Transverse colon (tissue), 4 donors: ENCODE measurements at regions of chr12 and their contacts with region 1.

Region 1: DNA sequence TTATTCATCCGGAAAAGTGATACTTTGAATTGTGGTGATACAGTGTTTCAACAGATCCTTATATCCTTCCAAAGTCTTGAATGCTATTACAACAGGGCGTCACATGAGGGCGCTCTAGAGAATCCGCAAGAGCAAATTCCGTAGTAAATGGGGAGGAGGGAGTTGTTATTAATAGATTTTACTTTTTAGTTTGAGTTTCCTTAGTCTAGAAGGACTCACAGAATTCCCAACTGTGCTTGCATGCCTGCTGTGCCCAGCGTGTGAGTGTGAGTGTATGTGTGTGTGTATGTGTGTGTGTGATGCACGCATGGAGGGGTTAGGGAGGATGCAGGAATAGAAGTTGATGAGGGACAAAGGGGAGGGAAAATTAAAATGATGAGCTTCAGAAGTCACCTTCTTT is 375.3 kb downstream of the C12orf75 start:
- DNase-seq: peak; percentile 53
- H3K4me3 ChIP-seq: no peak overlapping the region
- H3K27ac ChIP-seq: no peak overlapping the region
- H3K4me1 ChIP-seq: peaks cover 0 to 6% (median 0%) of the 10 kb centered on the region in 4 donors
- H3K27me3 ChIP-seq: no peaks in the 10 kb centered on the region
- CTCF ChIP-seq: peak; percentile 53 to 70 (median 62)
- EP300 ChIP-seq: no peak
- POLR2A ChIP-seq: no peak

Region 2: GRCh38 chr12:105738051-105738450 is 32.3 kb after region 1 on chr12:
- in situ Hi-C with region 1: no loop called
- intact Hi-C with region 1: loop called (anchors 1 kb)
- DNase-seq: no peak
- H3K4me3 ChIP-seq: no peak overlapping the region
- H3K27ac ChIP-seq: peak overlapping the region in 1 of 4 donors; percentile 21
- H3K4me1 ChIP-seq: peaks cover 0 to 12% (median 3%) of the 10 kb centered on the region in 4 donors
- H3K27me3 ChIP-seq: no peaks in the 10 kb centered on the region
- CTCF ChIP-seq: no peak
- EP300 ChIP-seq: no peak
- POLR2A ChIP-seq: no peak

Region 3: DNA sequence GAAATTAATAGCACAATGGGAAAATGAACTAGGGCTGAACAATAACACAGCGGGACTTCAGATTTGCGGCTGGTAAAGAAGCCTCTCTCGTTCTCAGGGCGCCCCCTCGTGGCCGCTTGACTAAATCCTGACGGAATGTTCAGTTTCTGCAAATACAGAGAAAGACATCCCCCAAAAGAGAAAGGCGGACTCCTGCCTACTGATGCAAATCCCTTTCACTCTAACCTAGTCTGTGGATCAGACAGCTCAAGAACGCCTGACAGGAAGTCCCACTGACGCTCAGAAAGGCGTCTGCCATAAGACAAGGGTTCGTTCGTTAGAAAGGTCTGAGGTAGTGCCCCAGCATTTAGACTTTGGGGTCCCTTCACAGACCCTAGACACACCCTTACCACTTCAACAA is 430.5 kb after region 1 on chr12:
- in situ Hi-C with region 1: loop called (anchors 10 to 25 kb)
- intact Hi-C with region 1: loop called (anchors 10 kb)
- DNase-seq: peak; percentile 86
- H3K4me3 ChIP-seq: peak overlapping the region in 1 of 4 donors; percentile 17
- H3K27ac ChIP-seq: peak overlapping the region; percentile 8 to 90 (median 72)
- H3K4me1 ChIP-seq: peaks cover 0 to 41% (median 11%) of the 10 kb centered on the region in 4 donors
- H3K27me3 ChIP-seq: peaks cover 35% of the 10 kb centered on the region
- CTCF ChIP-seq: peak; percentile 74 to 87 (median 82)
- EP300 ChIP-seq: no peak
- POLR2A ChIP-seq: no peak